Dorsolateral prefrontal cortex (tissue), 120 donors: ENCODE measurements at regions of chr9 and their contacts with region 1.

Region 1: GRCh38 chr9:99184475-99185347 is 37.0 kb downstream of the ALG2 start:
- DNase-seq: peak; percentile 85 to 94 (median 89)
- H3K4me3 ChIP-seq: peak overlapping the region; percentile 25 to 69 (median 49)
- H3K27ac ChIP-seq: peak overlapping the region in 10 of 59 donors; percentile 0 to 73 (median 40)
- H3K27me3 ChIP-seq: no peaks in the 10 kb centered on the region
- CTCF ChIP-seq: peak; percentile 75 to 99 (median 95)

Region 2: GRCh38 chr9:99109522-99109921 is 75.2 kb before region 1 on chr9:
- intact Hi-C with region 1: no loop called
- DNase-seq: peak in 1 of 10 donors; percentile 45
- H3K4me3 ChIP-seq: no peak overlapping the region
- H3K27ac ChIP-seq: peak overlapping the region in 19 of 59 donors; percentile 2 to 65 (median 34)
- H3K27me3 ChIP-seq: no peaks in the 10 kb centered on the region
- CTCF ChIP-seq: no peak

Region 3: GRCh38 chr9:99221621-99222415 is 37.1 kb after region 1 on chr9 and contains the starts of genes ALG2 and SEC61B:
- intact Hi-C with region 1: loop called in 1 of 2 experiments (anchors 5 kb)
- DNase-seq: peak; percentile 92 to 96 (median 94)
- H3K4me3 ChIP-seq: peak within 1 kb of the TSS; percentile 56 to 100 (median 97)
- H3K27ac ChIP-seq: peak within 1 kb of the TSS; percentile 87 to 100 (median 97)
- H3K27me3 ChIP-seq: no peaks in the 10 kb centered on the region
- CTCF ChIP-seq: peak in 26 of 56 donors; percentile 2 to 50 (median 25)
- total RNA-seq, gene ALG2: 11.4 to 25.3 (median 18.2) TPM
- total RNA-seq, gene SEC61B: 25.3 to 59.2 (median 38.7) TPM

Region 4: DNA sequence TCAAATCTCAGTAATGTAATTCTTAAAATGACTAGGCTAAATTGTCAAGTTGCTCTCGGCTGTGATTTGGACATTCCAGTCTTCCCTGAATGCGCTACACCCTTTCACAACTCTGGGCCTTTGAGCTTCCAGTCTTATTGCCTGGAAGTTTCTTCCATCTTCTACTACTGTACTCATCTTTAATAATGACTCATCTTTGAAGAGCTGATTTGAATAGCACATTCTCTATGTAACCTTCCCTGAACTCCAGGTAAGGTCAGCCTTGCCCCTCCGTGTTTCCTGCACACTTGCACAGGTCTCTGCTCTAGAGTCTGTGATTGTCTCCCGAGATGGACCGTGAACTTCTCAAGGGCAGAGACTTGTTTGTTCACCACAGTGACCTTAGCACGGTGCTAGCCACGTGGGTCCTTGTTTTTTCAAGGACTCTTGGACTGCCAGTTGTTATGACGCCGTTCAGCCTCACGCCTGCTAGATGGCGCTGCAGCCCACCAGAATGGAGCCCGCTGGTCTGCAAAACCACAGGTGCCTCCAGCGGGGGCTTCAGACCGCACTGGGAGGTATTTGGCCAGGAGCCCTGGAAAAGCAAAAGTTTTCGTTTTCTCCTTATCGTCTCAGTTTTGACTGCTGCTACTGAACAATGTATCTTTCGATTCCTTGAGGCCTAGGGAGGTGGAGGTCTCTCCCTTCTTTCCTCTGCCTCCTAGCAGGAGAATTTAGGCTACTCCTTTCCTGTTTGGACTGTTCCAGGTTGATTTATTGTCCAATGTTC is 81.7 kb after region 1 on chr9:
- intact Hi-C with region 1: loop called in 1 of 2 experiments (anchors 5 kb)
- DNase-seq: peak; percentile 64 to 83 (median 78)
- H3K4me3 ChIP-seq: peak overlapping the region in 26 of 59 donors; percentile 0 to 45 (median 24)
- H3K27ac ChIP-seq: no peak overlapping the region
- H3K27me3 ChIP-seq: no peaks in the 10 kb centered on the region
- CTCF ChIP-seq: peak; percentile 62 to 95 (median 88)

Region 5: GRCh38 chr9:99906403-99907207 is 721.9 kb after region 1 on chr9 and contains the start of gene STX17:
- intact Hi-C with region 1: loop called in 1 of 2 experiments (anchors 10 kb)
- DNase-seq: peak; percentile 57 to 89 (median 76)
- H3K4me3 ChIP-seq: peak within 1 kb of the TSS; percentile 60 to 100 (median 96)
- H3K27ac ChIP-seq: peak within 1 kb of the TSS; percentile 51 to 99 (median 92)
- H3K27me3 ChIP-seq: no peaks in the 10 kb centered on the region
- CTCF ChIP-seq: peak in 33 of 56 donors; percentile 2 to 56 (median 28)
- total RNA-seq, gene STX17: 24.2 to 64.4 (median 36.5) TPM

Region 6: GRCh38 chr9:100216178-100216787 is 1031.6 kb after region 1 on chr9:
- intact Hi-C with region 1: loop called in 1 of 2 experiments (anchors 10 kb)
- DNase-seq: peak in 3 of 10 donors; percentile 40 to 60 (median 49)
- H3K4me3 ChIP-seq: no peak overlapping the region
- H3K27ac ChIP-seq: no peak overlapping the region
- H3K27me3 ChIP-seq: no peaks in the 10 kb centered on the region
- CTCF ChIP-seq: peak; percentile 41 to 74 (median 61)

Region 7: GRCh38 chr9:100322954-100323536 is 1138.3 kb after region 1 on chr9:
- intact Hi-C with region 1: loop called (anchors 10 kb)
- DNase-seq: peak in 3 of 10 donors; percentile 14 to 56 (median 31)
- H3K4me3 ChIP-seq: no peak overlapping the region
- H3K27ac ChIP-seq: no peak overlapping the region
- H3K27me3 ChIP-seq: no peaks in the 10 kb centered on the region
- CTCF ChIP-seq: peak; percentile 47 to 88 (median 72)

Region 8: GRCh38 chr9:100437860-100438805 is 1253.4 kb after region 1 on chr9:
- intact Hi-C with region 1: loop called in 1 of 2 experiments (anchors 10 kb)
- DNase-seq: peak in 5 of 10 donors; percentile 28 to 65 (median 50)
- H3K4me3 ChIP-seq: peak overlapping the region in 1 of 59 donors; percentile 4
- H3K27ac ChIP-seq: no peak overlapping the region
- H3K27me3 ChIP-seq: no peaks in the 10 kb centered on the region
- CTCF ChIP-seq: peak; percentile 80 to 98 (median 91)